ENCODE measurements at regions of chr10 and their contacts with region 1.

Region 1: GRCh38 chr10:22560913-22561239 is 153.5 kb downstream of the PIP4K2A start:
- DNase-seq: no peak
- H3K4me3 ChIP-seq: no peak overlapping the region
- CTCF ChIP-seq: no peak

Region 2: DNA sequence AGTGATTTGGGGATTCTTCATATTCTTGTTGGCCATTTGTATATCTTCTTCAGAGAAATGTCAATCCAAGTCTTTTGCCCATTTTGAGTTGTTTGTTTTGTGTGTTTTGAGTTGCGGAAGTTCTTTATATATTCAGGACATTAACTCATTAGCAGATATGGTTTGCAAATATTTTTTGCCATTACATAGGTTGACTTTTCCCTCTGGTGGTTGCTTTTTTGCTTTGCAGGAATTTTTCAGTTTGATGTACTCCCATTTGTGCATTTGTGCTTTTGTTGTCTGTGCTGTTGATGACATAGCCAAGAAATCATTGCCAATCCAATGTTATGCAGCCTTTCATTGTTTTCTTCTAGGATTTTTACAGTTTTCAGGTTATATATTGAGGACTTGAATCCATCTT is 493.8 kb before region 1 on chr10:
- CTCF ChIA-PET with region 1: no interaction called
- POLR2A ChIA-PET with region 1: no interaction called
- DNase-seq: no peak
- H3K4me3 ChIP-seq: no peak overlapping the region
- CTCF ChIP-seq: no peak

Region 3: DNA sequence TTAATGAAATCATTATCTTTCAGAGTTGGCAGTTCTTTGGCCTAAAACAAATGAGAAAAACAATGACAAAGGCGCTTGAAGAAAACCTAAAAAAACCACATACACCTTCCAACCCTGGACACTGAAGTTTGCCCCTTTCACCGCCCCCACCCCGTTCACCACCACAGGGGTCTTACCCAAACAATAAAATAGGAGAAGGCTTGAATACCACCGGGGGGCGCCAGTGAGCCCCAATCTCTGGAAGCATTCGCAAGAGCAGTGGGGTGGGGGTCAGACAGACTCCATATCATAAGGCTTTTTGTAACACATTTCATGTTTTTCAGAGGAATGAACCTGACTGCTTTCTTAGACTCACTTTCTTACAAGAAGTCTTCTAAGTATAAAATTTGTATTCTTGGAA is 10.1 kb before region 1 on chr10:
- CTCF ChIA-PET with region 1: interaction called, 13 read pairs
- POLR2A ChIA-PET with region 1: no interaction called
- DNase-seq: no peak
- H3K4me3 ChIP-seq: no peak overlapping the region
- CTCF ChIP-seq: peak; percentile 41

Region 4: DNA sequence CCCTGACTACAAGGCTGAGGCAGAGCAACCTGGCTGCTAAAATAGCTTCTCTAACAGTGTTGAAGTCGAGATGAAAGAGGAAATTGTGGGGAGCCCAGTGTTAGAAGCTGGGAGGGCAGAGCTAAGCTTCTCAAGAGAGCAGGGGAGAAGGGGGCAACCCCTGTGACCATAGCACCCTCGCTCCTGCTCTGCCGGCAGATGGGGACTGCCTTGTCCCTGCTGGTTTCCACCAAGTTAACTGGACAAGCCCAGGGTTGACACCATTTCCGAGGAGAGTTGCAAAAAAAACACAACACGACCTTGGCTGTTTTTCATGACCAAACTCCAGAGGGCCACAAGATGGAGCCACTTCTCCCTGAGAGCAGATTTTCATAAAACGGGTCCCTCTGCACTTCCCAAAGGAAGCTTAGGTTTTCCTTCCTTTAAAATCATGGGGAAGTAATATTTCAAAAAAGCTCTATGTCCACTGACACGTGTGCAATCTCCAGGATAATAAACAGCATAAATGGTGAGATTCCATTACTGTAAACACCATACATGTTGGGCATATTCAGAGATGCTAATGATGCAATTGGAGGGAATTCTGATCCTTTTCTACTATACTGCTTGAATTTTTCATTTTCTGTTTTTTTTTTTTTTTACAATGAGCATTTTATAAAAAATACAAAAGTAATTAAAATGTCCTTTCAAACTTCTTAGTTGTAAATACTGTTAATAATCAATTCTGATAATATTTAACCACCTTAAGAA is 13.1 kb after region 1 on chr10:
- CTCF ChIA-PET with region 1: interaction called, 17 read pairs
- POLR2A ChIA-PET with region 1: no interaction called
- DNase-seq: no peak
- H3K4me3 ChIP-seq: no peak overlapping the region
- CTCF ChIP-seq: peak; percentile 42